ENCODE measurements at regions of chr12 and their contacts with region 1.

Region 1: GRCh38 chr12:40107098-40107802 is 1.4 kb upstream of the SLC2A13 start:
- DNase-seq: peak; percentile 63 to 94
- H3K4me3 ChIP-seq: peak overlapping the region; percentile 45 to 96
- H3K27ac ChIP-seq: peak overlapping the region; percentile 86 to 90
- H3K4me1 ChIP-seq: peaks cover 0 to 10% of the 10 kb centered on the region in 2 donors
- H3K27me3 ChIP-seq: no peaks in the 10 kb centered on the region
- CTCF ChIP-seq: peak; percentile 71 to 91 (median 77)

Region 2: GRCh38 chr12:39764944-39765560 is 342.2 kb before region 1 on chr12:
- intact Hi-C with region 1: loop called (anchors 1 kb)
- DNase-seq: no peak
- H3K4me3 ChIP-seq: no peak overlapping the region
- H3K27ac ChIP-seq: no peak overlapping the region
- H3K4me1 ChIP-seq: no peaks in the 10 kb centered on the region
- H3K27me3 ChIP-seq: no peaks in the 10 kb centered on the region
- CTCF ChIP-seq: peak; percentile 40 to 54 (median 49)

Region 3: DNA sequence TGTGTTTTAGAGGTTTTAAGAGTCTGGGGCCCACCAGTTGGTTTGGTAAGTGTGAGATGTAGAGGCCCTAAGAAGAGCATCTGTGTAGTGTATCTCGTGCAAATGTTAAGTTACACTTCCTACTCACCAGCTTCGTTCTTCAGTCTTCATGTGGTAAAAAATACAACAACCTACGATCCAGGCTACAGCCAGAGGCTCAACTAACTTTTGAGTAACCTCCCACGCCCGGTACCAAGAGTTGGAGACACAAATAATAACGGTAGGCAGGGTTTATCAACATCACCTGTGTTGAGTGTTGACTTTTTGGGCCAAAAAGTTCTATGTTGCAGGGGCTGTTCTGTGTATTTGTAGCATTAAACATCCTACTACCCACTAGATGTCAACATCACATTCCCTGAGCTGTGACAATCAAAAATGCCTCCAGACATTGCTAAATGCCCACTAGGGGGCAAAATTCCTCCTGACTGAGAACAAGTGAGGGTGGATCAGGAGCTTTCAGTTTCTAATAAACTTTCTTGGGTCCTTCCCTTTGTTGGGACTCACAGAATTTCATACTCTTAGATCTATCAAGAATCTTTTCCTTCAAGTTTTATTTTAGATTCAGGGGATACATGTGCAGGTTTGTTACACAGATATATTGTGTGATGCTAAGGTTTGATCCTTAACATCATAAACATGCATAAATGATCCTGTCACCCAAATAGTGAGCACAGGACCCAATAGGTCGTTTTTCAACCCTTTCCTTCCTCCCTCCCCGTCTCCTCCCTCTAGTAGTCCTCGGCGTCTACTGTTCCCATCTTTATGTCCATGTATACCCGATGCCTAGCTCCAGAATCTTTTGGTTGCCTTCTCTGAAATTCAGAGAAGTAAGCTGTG is 96.1 kb before region 1 on chr12:
- intact Hi-C with region 1: loop called (anchors 1 kb)
- DNase-seq: peak; percentile 9 to 77
- H3K4me3 ChIP-seq: peak overlapping the region; percentile 31 to 48
- H3K27ac ChIP-seq: peak overlapping the region in 1 of 2 donors; percentile 13
- H3K4me1 ChIP-seq: peaks cover 0 to 4% of the 10 kb centered on the region in 2 donors
- H3K27me3 ChIP-seq: no peaks in the 10 kb centered on the region
- CTCF ChIP-seq: peak; percentile 55 to 79 (median 64)

Region 4: GRCh38 chr12:40065636-40066035 is 41.6 kb before region 1 on chr12:
- intact Hi-C with region 1: loop called (anchors 5 kb)
- DNase-seq: no peak
- H3K4me3 ChIP-seq: no peak overlapping the region
- H3K27ac ChIP-seq: no peak overlapping the region
- H3K4me1 ChIP-seq: no peaks in the 10 kb centered on the region
- H3K27me3 ChIP-seq: no peaks in the 10 kb centered on the region
- CTCF ChIP-seq: no peak

Region 5: DNA sequence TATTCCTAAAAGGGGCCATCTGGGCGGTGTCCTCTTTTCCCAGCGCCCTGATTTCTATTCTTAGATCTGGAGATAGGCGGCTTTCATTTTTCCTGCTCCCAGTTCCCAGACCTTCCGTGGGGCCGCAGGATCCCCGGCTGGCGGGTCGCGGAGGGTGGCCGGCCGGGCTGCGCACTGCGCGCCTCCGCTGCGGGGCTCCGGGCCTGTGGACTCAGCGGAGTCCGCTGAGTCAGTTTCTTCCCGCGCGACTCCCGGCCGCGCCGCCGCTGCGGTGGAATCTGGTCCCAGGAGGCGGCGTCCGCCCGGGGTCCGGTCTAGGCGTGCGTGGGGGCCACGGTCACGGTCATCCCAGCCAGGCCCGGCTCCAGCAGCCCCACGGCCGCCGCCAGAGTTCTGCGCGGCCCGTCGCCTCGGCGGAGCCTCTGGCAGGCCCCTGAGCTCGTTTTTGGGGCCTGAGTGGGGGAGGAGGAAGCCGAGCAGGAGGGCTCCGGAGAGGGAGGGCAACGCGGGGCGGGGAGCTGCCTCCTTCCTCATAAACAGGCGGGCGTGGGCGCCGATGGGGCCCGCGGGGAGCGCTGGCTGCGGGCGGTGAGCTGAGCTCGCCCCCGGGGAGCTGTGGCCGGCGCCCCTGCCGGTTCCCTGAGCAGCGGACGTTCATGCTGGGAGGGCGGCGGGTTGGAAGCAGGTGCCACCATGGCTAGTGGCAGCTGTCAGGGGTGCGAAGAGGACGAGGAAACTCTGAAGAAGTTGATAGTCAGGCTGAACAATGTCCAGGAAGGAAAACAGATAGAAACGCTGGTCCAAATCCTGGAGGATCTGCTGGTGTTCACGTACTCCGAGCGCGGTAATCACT is 117.4 kb after region 1 on chr12 and contains the start of gene LRRK2:
- intact Hi-C with region 1: loop called (anchors 5 kb)
- DNase-seq: peak; percentile 49 to 92
- H3K4me3 ChIP-seq: peak within 1 kb of the TSS; percentile 69 to 82
- H3K27ac ChIP-seq: peak within 1 kb of the TSS; percentile 90 to 94
- H3K4me1 ChIP-seq: peaks cover 2 to 6% of the 10 kb centered on the region in 2 donors
- H3K27me3 ChIP-seq: no peaks in the 10 kb centered on the region
- CTCF ChIP-seq: peak in 1 of 3 experiments; percentile 15
- total RNA-seq, gene LRRK2: 14.3 TPM

Region 6: DNA sequence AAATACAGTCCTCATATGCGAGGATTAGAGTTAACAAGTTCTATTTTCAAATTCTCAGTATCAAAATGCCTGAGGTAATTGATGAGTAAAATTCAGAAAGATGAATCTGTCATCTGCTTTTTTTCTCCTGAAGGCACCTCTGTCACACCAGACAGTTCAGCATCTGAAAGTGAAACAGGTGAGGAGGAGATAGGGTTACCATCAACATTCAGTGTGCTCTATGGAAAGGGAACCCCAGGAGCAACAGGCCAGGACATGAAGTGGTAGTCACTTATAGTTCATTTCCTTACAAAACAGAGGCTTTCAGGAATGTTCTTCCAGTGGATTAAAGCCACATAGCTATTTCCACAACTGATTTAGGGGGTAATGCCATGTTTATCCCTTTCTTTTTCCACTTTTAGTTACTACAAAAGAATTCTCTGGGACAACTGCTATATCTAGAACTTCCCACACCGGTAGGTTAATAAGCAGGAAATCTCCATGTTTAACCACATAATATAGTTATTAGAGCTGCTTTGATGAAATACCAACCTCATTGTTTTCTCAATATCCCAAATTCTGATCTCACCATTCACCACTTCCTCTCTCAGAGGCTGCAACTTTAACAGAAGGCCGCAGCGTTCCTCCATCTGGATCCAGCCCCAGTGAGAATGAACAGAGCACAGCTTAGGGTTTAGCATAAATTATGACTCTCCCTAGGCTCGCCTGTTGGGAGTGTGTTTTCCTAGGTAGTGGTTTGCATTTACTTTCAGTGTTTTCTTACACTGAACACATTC is 408.0 kb after region 1 on chr12:
- intact Hi-C with region 1: no loop called
- DNase-seq: no peak
- H3K4me3 ChIP-seq: no peak overlapping the region
- H3K27ac ChIP-seq: no peak overlapping the region
- H3K4me1 ChIP-seq: no peaks in the 10 kb centered on the region
- H3K27me3 ChIP-seq: no peaks in the 10 kb centered on the region
- CTCF ChIP-seq: no peak

Measured in ascending aorta (tissue), 2 donors.